CD4-positive, alpha-beta memory T cell (primary cell): ENCODE measurements at regions of chr14 and their contacts with region 1.

Region 1: GRCh38 chr14:22570132-22570949 is 18.7 kb downstream of the DAD1 start:
- DNase-seq: peak; percentile 94 to 97 (median 96)
- H3K4me3 ChIP-seq: peak overlapping the region; percentile 6 to 41
- H3K4me3 Mint-ChIP-seq: peak overlapping the region; percentile 54 to 85 (median 80)
- H3K27ac ChIP-seq: peak overlapping the region; percentile 69
- H3K27ac Mint-ChIP-seq: peak overlapping the region; percentile 95 to 100 (median 98)
- H3K4me1 ChIP-seq: peaks cover 52% of the 10 kb centered on the region
- H3K4me1 Mint-ChIP-seq: peaks cover 38 to 57% (median 46%) of the 10 kb centered on the region in 4 donors
- H3K27me3 ChIP-seq: no peaks in the 10 kb centered on the region
- H3K27me3 Mint-ChIP-seq: no peaks in the 10 kb centered on the region

Region 2: DNA sequence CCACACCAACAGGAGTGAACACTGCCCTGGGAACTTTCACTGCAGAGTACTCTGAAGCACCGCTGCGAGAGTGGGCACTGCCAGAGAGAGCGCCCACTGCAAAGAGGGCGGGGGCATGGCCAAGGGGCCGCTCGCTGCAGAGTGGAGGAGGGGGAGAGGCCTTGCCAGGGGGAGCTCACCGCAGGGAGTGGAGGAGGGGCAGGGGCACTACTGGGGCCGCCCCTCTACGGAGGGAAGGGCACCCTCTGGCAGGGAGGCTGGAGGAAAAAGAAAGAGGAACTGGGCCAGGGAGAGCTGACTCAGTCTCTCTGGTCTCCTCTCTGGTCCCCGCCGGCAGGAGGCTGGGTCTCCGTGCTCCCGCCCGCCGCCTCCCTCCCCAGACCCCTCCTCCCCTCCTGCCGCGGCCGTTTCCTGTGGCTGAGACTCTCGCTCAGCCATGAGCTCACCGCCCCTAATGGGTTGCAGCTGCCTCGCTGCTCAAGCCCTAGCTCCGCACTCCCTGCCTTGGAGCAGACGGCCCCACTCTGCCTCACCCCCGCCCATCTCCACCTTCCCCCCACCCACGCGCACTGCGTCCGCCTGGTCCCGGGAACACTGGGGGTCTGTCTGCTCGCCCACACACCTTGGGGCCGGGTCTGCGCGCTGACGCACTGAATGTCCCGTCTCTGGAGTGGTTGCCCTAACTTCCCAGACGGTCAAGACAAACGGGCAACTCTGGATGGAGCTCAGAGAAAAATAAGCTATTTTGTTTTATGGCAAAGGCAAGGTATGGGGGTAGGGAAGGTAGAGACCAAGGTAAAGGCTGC is 1498.9 kb before region 1 on chr14:
- CTCF ChIA-PET with region 1: no interaction called
- POLR2A ChIA-PET with region 1: no interaction called
- intact Hi-C with region 1: no loop called
- DNase-seq: peak in 4 of 5 donors; percentile 23 to 75 (median 32)
- H3K4me3 ChIP-seq: peak overlapping the region in 1 of 2 donors; percentile 42
- H3K4me3 Mint-ChIP-seq: peak overlapping the region; percentile 80 to 90 (median 86)
- H3K27ac ChIP-seq: peak overlapping the region; percentile 25
- H3K27ac Mint-ChIP-seq: peak overlapping the region in 6 of 7 donors; percentile 77 to 88 (median 83)
- H3K4me1 ChIP-seq: peaks cover 35% of the 10 kb centered on the region
- H3K4me1 Mint-ChIP-seq: peaks cover 22 to 41% (median 30%) of the 10 kb centered on the region in 4 donors
- H3K27me3 ChIP-seq: peaks cover 52% of the 10 kb centered on the region
- H3K27me3 Mint-ChIP-seq: peaks cover 29 to 50% of the 10 kb centered on the region in 2 donors

Region 3: GRCh38 chr14:21840765-21841164 is 729.6 kb before region 1 on chr14:
- CTCF ChIA-PET with region 1: interaction called, 9 read pairs
- POLR2A ChIA-PET with region 1: interaction called, 10 read pairs
- intact Hi-C with region 1: no loop called
- DNase-seq: peak in 4 of 5 donors; percentile 17 to 39 (median 28)
- H3K4me3 ChIP-seq: no peak overlapping the region
- H3K4me3 Mint-ChIP-seq: peak overlapping the region; percentile 49 to 79 (median 69)
- H3K27ac ChIP-seq: no peak overlapping the region
- H3K27ac Mint-ChIP-seq: peak overlapping the region in 6 of 7 donors; percentile 39 to 96 (median 62)
- H3K4me1 ChIP-seq: peaks cover 3% of the 10 kb centered on the region
- H3K4me1 Mint-ChIP-seq: peaks cover 0 to 11% (median 2%) of the 10 kb centered on the region in 4 donors
- H3K27me3 ChIP-seq: no peaks in the 10 kb centered on the region
- H3K27me3 Mint-ChIP-seq: peaks cover 16 to 17% of the 10 kb centered on the region in 2 donors

Region 4: DNA sequence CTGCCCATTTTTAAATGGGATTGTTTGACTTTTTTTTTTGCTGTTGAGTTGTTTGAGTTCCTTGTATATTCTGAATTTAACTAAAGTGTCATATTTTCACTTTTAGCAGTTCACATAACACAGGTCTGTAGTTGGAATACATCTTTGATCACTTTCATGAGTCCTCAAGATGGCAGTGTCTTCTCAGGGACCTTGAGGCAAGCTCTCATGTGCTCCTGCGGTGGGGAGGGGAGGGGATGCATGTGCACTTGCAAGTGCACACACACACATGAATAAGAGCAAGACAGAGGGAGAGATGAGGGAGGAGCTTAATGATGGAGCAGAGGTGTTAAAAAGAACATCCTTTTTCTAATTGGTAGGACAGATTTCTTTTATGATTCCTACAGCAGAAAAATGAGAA is 605.3 kb before region 1 on chr14:
- CTCF ChIA-PET with region 1: interaction called, 5 read pairs
- POLR2A ChIA-PET with region 1: interaction called, 12 read pairs
- intact Hi-C with region 1: loop called (anchors 1 kb)
- DNase-seq: peak; percentile 34 to 74 (median 58)
- H3K4me3 ChIP-seq: no peak overlapping the region
- H3K4me3 Mint-ChIP-seq: peak overlapping the region; percentile 36 to 73 (median 66)
- H3K27ac ChIP-seq: no peak overlapping the region
- H3K27ac Mint-ChIP-seq: peak overlapping the region; percentile 23 to 93 (median 65)
- H3K4me1 ChIP-seq: peaks cover 21% of the 10 kb centered on the region
- H3K4me1 Mint-ChIP-seq: peaks cover 8 to 23% (median 13%) of the 10 kb centered on the region in 4 donors
- H3K27me3 ChIP-seq: no peaks in the 10 kb centered on the region
- H3K27me3 Mint-ChIP-seq: peaks cover 0 to 3% of the 10 kb centered on the region in 2 donors

Region 5: GRCh38 chr14:22221508-22221907 is 348.8 kb before region 1 on chr14:
- CTCF ChIA-PET with region 1: interaction called, 6 read pairs
- POLR2A ChIA-PET with region 1: interaction called, 3 read pairs
- intact Hi-C with region 1: loop called (anchors 2 kb)
- DNase-seq: peak in 1 of 5 donors; percentile 21
- H3K4me3 ChIP-seq: no peak overlapping the region
- H3K4me3 Mint-ChIP-seq: peak overlapping the region in 7 of 8 donors; percentile 54 to 76 (median 67)
- H3K27ac ChIP-seq: no peak overlapping the region
- H3K27ac Mint-ChIP-seq: peak overlapping the region in 3 of 7 donors; percentile 67 to 84 (median 70)
- H3K4me1 ChIP-seq: no peaks in the 10 kb centered on the region
- H3K4me1 Mint-ChIP-seq: peaks cover 1 to 7% (median 6%) of the 10 kb centered on the region in 4 donors
- H3K27me3 ChIP-seq: no peaks in the 10 kb centered on the region
- H3K27me3 Mint-ChIP-seq: no peaks in the 10 kb centered on the region

Region 6: GRCh38 chr14:22549981-22550673 is 20.2 kb before region 1 on chr14:
- CTCF ChIA-PET with region 1: interaction called, 305 read pairs
- POLR2A ChIA-PET with region 1: interaction called, 1,226 read pairs
- intact Hi-C with region 1: no loop called
- DNase-seq: peak; percentile 58 to 96 (median 63)
- H3K4me3 ChIP-seq: peak overlapping the region; percentile 3 to 7
- H3K4me3 Mint-ChIP-seq: peak overlapping the region; percentile 64 to 91 (median 78)
- H3K27ac ChIP-seq: peak overlapping the region; percentile 97
- H3K27ac Mint-ChIP-seq: peak overlapping the region; percentile 97 to 100 (median 100)
- H3K4me1 ChIP-seq: peaks cover 99% of the 10 kb centered on the region
- H3K4me1 Mint-ChIP-seq: peaks cover 87 to 97% (median 93%) of the 10 kb centered on the region in 4 donors
- H3K27me3 ChIP-seq: no peaks in the 10 kb centered on the region
- H3K27me3 Mint-ChIP-seq: no peaks in the 10 kb centered on the region

Region 7: DNA sequence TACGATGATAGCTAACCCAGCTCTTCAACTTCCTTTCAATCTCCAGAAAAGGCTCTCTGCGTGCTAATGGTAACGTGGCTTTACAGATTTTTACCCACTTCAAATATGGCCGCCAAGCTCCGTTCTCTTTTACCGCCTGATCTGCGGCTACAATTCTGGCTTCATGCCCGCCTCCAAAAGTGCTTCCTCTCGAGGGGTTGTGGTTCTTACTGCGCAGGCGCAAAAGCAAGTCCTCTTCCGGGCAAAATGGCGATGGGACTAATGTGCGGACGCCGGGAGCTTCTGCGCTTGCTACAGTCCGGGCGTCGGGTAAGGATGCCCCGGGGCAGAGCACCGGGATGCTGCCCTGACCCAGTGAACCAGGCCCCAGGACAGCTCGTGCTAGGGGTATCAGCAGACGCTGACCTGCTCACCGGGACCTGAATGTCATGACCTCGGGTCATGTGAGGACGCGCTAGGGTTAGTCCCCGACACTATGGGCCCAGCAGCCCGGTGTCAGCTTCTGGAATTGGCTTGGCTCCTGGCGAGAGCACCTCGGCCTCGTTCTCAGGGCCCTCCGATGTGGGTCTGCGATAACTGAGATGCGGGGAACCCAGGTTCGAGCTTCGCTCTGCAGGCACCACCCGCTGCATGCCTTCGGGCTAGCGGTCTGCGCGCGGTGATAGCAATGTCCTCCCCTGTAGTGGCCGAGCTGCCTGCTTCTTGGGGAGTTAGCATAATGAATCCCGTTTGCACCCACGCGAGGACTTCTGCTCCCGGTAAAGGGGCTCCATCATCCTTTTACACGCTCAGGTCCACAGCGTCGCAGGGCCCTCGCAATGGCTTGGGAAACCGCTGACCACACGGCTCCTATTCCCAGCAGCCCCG is 196.3 kb after region 1 on chr14 and contains the start of gene OXA1L:
- CTCF ChIA-PET with region 1: interaction called, 8 read pairs
- POLR2A ChIA-PET with region 1: interaction called, 13 read pairs
- intact Hi-C with region 1: loop called (anchors 5 kb)
- DNase-seq: peak; percentile 95 to 98 (median 98)
- H3K4me3 ChIP-seq: peak within 1 kb of the TSS; percentile 62 to 88
- H3K4me3 Mint-ChIP-seq: peak within 1 kb of the TSS; percentile 85 to 96 (median 94)
- H3K27ac ChIP-seq: peak within 1 kb of the TSS; percentile 88
- H3K27ac Mint-ChIP-seq: peak within 1 kb of the TSS; percentile 86 to 100 (median 98)
- H3K4me1 ChIP-seq: peaks cover 24% of the 10 kb centered on the region
- H3K4me1 Mint-ChIP-seq: peaks cover 26 to 39% (median 34%) of the 10 kb centered on the region in 4 donors
- H3K27me3 ChIP-seq: no peaks in the 10 kb centered on the region
- H3K27me3 Mint-ChIP-seq: no peaks in the 10 kb centered on the region
- total RNA-seq, gene OXA1L: 129 to 137 TPM

Region 8: DNA sequence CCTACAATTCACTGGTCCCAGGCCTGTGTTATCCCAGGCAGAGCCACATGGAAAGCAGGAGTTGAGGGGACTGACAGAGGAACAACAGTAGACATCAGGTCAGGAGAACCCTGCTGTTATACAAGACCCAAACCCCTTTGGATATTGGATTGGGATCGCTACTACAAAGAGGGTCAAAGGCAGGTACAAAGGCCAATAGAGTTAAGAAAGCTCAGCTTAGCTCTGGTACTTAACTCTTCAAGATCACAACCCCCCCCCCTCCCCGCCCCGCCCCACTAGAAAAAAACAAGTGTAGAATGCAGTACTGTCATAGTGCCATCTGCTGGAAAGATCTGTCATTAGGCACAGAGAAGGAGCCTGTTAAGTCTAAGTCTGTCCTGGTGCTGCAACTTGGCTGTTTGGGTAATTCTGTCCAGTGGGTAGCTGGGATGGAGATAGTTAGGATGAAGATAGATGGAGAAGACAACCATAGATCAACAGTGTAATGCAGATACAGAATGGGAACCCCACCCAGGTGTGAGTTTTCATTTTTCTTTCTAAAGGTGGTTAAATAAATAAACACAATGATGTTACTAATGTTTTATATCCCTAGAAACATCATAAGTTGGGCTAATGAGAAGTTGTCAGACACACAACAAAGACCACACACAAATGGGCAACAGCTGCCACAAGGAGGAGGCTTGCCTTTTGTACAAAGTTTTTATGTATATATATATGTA is 329.9 kb after region 1 on chr14:
- CTCF ChIA-PET with region 1: interaction called, 13 read pairs
- POLR2A ChIA-PET with region 1: interaction called, 3 read pairs
- intact Hi-C with region 1: loop called (anchors 1 kb)
- DNase-seq: peak; percentile 66 to 72 (median 67)
- H3K4me3 ChIP-seq: no peak overlapping the region
- H3K4me3 Mint-ChIP-seq: no peak overlapping the region
- H3K27ac ChIP-seq: no peak overlapping the region
- H3K27ac Mint-ChIP-seq: peak overlapping the region; percentile 12 to 65 (median 54)
- H3K4me1 ChIP-seq: peaks cover 4% of the 10 kb centered on the region
- H3K4me1 Mint-ChIP-seq: peaks cover 5 to 15% (median 5%) of the 10 kb centered on the region in 4 donors
- H3K27me3 ChIP-seq: no peaks in the 10 kb centered on the region
- H3K27me3 Mint-ChIP-seq: no peaks in the 10 kb centered on the region